Activated naive CD4-positive, alpha-beta T cell treated with anti-CD3 and anti-CD28 coated beads for 36 hours (primary cell): ENCODE measurements at regions of chr2 and their contacts with region 1.

Region 1: GRCh38 chr2:66574701-66575624 is 140.0 kb downstream of the MEIS1 start:
- DNase-seq: peak; percentile 23
- H3K4me3 Mint-ChIP-seq: no peak overlapping the region
- H3K27ac Mint-ChIP-seq: no peak overlapping the region
- H3K4me1 Mint-ChIP-seq: peaks cover 11% of the 10 kb centered on the region
- H3K27me3 Mint-ChIP-seq: peaks cover 50% of the 10 kb centered on the region

Region 2: GRCh38 chr2:65640793-65641103 is 934.2 kb before region 1 on chr2:
- CTCF ChIA-PET with region 1: no interaction called
- intact Hi-C with region 1: loop called (anchors 5 kb)
- DNase-seq: no peak
- H3K4me3 Mint-ChIP-seq: no peak overlapping the region
- H3K27ac Mint-ChIP-seq: no peak overlapping the region
- H3K4me1 Mint-ChIP-seq: peaks cover 3% of the 10 kb centered on the region
- H3K27me3 Mint-ChIP-seq: peaks cover 10% of the 10 kb centered on the region

Region 3: DNA sequence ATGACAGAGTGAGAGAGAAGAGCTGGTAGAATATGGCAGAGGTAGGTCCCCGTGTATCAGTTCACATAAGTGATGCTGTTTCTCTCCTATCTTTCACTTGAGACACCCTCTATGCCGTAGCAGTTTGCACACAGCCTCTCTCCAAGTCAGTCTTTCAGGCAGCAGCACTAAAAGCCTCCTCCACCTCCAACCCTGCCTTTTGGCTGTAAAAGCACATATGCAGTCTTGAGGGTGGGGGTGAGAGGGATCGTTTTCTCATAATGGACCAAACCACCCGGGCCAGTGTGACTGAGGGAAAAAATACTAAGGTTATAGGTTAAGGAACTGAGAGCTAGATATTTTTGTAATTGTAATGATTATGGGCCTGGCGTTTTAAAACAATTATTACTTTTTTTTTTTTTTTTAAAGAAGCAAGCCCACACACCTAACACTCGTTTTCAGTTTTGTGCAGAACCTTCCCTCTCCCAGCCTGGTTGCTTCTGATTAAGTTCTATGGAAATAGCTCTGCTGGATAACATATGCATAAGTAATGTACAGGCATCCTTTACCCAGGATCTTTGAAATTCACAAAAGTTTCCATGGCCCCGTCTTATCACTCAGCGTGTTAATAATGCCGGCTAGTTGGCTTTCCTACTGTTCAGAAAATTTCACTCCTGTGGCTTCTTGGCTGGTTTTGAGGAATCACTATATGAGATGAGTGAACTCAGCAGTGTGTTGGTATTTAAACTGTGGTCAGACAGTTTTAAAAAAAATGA is 252.3 kb before region 1 on chr2:
- CTCF ChIA-PET with region 1: no interaction called
- intact Hi-C with region 1: no loop called
- DNase-seq: no peak
- H3K4me3 Mint-ChIP-seq: no peak overlapping the region
- H3K27ac Mint-ChIP-seq: no peak overlapping the region
- H3K4me1 Mint-ChIP-seq: no peaks in the 10 kb centered on the region
- H3K27me3 Mint-ChIP-seq: no peaks in the 10 kb centered on the region

Region 4: GRCh38 chr2:66434679-66435548 is 140.0 kb before region 1 on chr2 and contains the start of gene MEIS1:
- CTCF ChIA-PET with region 1: interaction called, 3 read pairs
- intact Hi-C with region 1: loop called (anchors 2 kb)
- DNase-seq: peak; percentile 32
- H3K4me3 Mint-ChIP-seq: peak within 1 kb of the TSS; percentile 68
- H3K27ac Mint-ChIP-seq: no peak within 1 kb of the TSS
- H3K4me1 Mint-ChIP-seq: peaks cover 34% of the 10 kb centered on the region
- H3K27me3 Mint-ChIP-seq: peaks cover 83% of the 10 kb centered on the region
- total RNA-seq, gene MEIS1: not detected

Region 5: DNA sequence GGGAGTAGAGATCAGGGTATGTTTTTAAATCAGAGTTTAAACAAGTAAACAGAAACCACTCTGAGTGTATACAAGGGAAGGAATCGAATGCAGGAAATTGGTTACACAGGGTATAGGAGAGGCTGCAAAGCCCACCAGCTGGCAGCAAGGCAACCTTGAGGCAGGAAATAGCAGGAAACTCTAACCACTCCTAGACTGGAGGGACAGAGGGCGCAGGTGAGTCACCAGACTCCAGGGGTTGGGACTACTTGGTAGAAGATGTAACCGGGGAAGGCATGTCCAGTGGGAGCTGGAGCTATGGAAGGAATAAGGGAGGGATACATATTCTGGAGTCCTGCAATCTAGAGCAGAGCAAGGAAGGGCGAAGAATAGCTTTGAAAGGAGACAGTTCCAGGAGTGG is 12.3 kb after region 1 on chr2:
- CTCF ChIA-PET with region 1: no interaction called
- intact Hi-C with region 1: no loop called
- DNase-seq: no peak
- H3K4me3 Mint-ChIP-seq: no peak overlapping the region
- H3K27ac Mint-ChIP-seq: no peak overlapping the region
- H3K4me1 Mint-ChIP-seq: no peaks in the 10 kb centered on the region
- H3K27me3 Mint-ChIP-seq: peaks cover 6% of the 10 kb centered on the region

Region 6: GRCh38 chr2:66851449-66851872 is 276.5 kb after region 1 on chr2:
- CTCF ChIA-PET with region 1: no interaction called
- intact Hi-C with region 1: no loop called
- DNase-seq: no peak
- H3K4me3 Mint-ChIP-seq: no peak overlapping the region
- H3K27ac Mint-ChIP-seq: no peak overlapping the region
- H3K4me1 Mint-ChIP-seq: no peaks in the 10 kb centered on the region
- H3K27me3 Mint-ChIP-seq: no peaks in the 10 kb centered on the region

Region 7: DNA sequence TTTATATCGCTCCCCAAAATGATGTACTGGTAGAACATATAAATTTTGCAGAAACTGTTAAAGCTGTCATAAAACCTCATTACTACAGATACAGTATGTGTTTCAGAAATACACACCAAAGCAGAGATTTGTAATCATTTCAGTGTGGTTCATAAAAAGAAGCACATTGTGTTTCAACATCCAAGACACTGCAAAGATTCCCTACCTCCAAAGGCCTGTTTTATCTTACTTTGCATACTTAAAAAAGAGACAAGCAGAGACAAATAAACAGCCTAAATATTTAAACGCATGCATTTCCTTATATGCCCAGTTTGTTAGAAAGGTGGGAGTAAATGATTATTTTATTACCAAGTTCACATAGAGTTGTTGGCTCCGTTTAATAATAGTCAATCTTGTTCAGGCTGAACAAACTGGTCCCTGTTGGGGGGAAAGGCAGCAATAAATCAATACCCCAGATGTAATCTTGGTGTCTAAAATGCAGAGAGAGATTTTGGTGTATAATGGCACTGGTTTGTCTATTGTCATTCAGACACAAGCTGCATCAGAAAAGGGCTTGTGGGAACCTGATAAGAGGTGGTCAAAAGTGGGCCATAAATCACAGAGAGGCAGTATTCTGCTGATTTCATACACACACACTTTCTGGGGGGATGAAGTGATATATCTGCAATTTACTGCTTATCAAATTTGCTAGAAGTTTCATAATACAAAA is 500.7 kb after region 1 on chr2:
- CTCF ChIA-PET with region 1: no interaction called
- intact Hi-C with region 1: no loop called
- DNase-seq: no peak
- H3K4me3 Mint-ChIP-seq: no peak overlapping the region
- H3K27ac Mint-ChIP-seq: no peak overlapping the region
- H3K4me1 Mint-ChIP-seq: no peaks in the 10 kb centered on the region
- H3K27me3 Mint-ChIP-seq: no peaks in the 10 kb centered on the region

Region 8: GRCh38 chr2:67397143-67397986 is 822.4 kb after region 1 on chr2 and contains the start of gene ETAA1:
- CTCF ChIA-PET with region 1: no interaction called
- intact Hi-C with region 1: loop called (anchors 10 kb)
- DNase-seq: peak; percentile 95
- H3K4me3 Mint-ChIP-seq: peak within 1 kb of the TSS; percentile 97
- H3K27ac Mint-ChIP-seq: peak within 1 kb of the TSS; percentile 98
- H3K4me1 Mint-ChIP-seq: peaks cover 20% of the 10 kb centered on the region
- H3K27me3 Mint-ChIP-seq: no peaks in the 10 kb centered on the region
- total RNA-seq, gene ETAA1: 12.8 to 14.0 TPM